ENCODE measurements at regions of chr13 and their contacts with region 1.

Region 1: GRCh38 chr13:94595950-94596574 is at the start of gene TGDS:
- DNase-seq: peak; percentile 91
- ATAC-seq: peak; percentile 99
- total RNA-seq, gene TGDS: 14.0 TPM

Region 2: DNA sequence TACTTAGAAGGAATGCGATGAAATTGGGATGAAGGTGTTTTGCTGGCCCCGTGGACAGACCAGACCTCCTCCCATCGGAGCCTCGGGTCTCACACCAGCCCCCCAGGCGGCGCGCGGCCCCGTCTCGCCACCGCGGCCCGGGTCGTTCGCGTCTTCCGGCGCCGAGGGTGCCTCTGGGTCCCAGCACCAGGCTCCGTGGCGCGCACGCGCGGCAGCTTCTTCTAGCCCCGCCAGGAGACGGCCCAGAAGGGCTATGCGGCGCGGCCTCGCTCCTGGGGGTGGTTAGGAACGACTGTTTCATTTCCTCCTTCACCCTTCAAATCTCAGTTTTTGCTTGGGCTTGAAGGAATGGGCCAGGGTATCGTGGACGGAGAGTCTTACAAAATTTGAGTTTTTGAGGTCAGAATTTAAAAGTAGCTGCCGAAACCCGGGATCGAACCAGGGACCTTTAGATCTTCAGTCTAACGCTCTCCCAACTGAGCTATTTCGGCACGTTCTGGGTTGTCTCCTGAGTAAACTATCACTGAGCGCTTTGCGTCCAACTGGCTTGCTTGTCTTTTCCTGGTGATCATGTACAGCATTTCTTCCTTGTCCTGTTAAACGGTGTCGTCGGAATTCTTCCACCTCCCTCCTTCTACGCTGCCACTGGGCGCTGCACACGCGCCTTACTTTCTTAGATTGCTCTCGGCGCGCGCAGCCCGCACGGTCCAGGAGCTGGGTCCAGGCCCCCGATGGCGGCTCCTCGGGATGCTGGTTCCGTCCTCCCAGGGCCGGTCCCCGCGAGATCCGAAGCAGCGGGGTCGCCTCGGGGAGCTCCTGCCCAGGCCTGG is 46.6 kb before region 1 on chr13:
- intact Hi-C with region 1: loop called (anchors 5 kb)
- DNase-seq: peak; percentile 93
- ATAC-seq: peak; percentile 97

Measured in sciatic nerve (tissue), 2 donors.